ENCODE measurements at regions of chrX and their contacts with region 1.

Region 1: GRCh38 chrX:15143050-15143824 is 126.6 kb downstream of the ASB9 start:
- DNase-seq: no peak
- ATAC-seq: peak; percentile 94
- H3K4me3 ChIP-seq: no peak overlapping the region
- H3K27ac ChIP-seq: no peak overlapping the region
- H3K4me1 ChIP-seq: no peaks in the 10 kb centered on the region
- H3K27me3 ChIP-seq: no peaks in the 10 kb centered on the region; a peak in 1 of 4 replicates
- CTCF ChIP-seq: peak; percentile 79 to 81 (median 79)
- EP300 ChIP-seq: no peak
- POLR2A ChIP-seq: no peak
- RAD21 ChIP-seq: peak; percentile 80

Region 2: DNA sequence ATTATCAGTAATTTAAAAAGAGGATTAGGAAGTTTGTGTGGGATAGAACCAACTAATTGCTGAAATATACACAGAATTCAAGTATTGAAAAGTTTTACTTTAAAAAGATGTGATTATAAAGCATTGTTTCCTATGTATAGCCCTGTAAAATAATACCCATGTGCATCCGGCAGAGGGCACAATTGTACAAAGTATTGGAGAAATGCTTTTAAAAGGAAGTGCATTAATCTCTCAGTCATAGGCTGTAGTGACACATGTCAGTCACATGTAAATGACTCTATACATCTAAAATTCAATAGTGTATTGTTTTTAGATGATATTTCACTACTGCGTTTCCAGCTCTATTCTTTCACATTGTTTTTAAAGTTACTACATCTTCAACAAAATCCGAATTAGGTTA is 1103.9 kb before region 1 on chrX:
- CTCF ChIA-PET with region 1: interaction called, 9 read pairs
- POLR2A ChIA-PET with region 1: no interaction called
- RAD21 ChIA-PET with region 1: no interaction called
- SMC1A ChIA-PET with region 1: interaction called, 7 read pairs
- in situ Hi-C with region 1: loop called (anchors 10 kb)
- intact Hi-C with region 1: loop called (anchors 5 kb)
- DNase-seq: no peak
- ATAC-seq: peak; percentile 95
- H3K4me3 ChIP-seq: no peak overlapping the region
- H3K27ac ChIP-seq: no peak overlapping the region
- H3K4me1 ChIP-seq: no peaks in the 10 kb centered on the region
- H3K27me3 ChIP-seq: peaks cover 0 to 2% of the 10 kb centered on the region in 2 experiments; a peak in 1 of 4 replicates
- CTCF ChIP-seq: peak; percentile 48 to 81 (median 61); a peak in 5 of 6 replicates
- EP300 ChIP-seq: peak in 1 of 2 experiments; percentile 99; a peak in 2 of 4 replicates
- POLR2A ChIP-seq: no peak
- RAD21 ChIP-seq: peak; percentile 88

Region 3: GRCh38 chrX:14528629-14529289 is 614.5 kb before region 1 on chrX:
- CTCF ChIA-PET with region 1: interaction called, 12 read pairs
- POLR2A ChIA-PET with region 1: no interaction called
- RAD21 ChIA-PET with region 1: interaction called, 7 read pairs
- SMC1A ChIA-PET with region 1: no interaction called
- in situ Hi-C with region 1: no loop called
- intact Hi-C with region 1: no loop called
- DNase-seq: peak; percentile 4
- ATAC-seq: peak; percentile 91
- H3K4me3 ChIP-seq: no peak overlapping the region
- H3K27ac ChIP-seq: no peak overlapping the region
- H3K4me1 ChIP-seq: no peaks in the 10 kb centered on the region
- H3K27me3 ChIP-seq: no peaks in the 10 kb centered on the region
- CTCF ChIP-seq: peak; percentile 44 to 64 (median 63); a peak in 5 of 6 replicates
- EP300 ChIP-seq: no peak
- POLR2A ChIP-seq: no peak
- RAD21 ChIP-seq: peak; percentile 75

Region 4: GRCh38 chrX:14872851-14873675 is 270.2 kb before region 1 on chrX and contains the starts of genes FANCB and MOSPD2:
- CTCF ChIA-PET with region 1: interaction called, 3 read pairs
- POLR2A ChIA-PET with region 1: no interaction called
- RAD21 ChIA-PET with region 1: interaction called, 3 read pairs
- SMC1A ChIA-PET with region 1: no interaction called
- in situ Hi-C with region 1: no loop called
- intact Hi-C with region 1: loop called (anchors 10 kb)
- DNase-seq: peak; percentile 73
- ATAC-seq: peak; percentile 97
- H3K4me3 ChIP-seq: peak within 1 kb of the TSS; percentile 73
- H3K27ac ChIP-seq: peak within 1 kb of the TSS; percentile 69
- H3K4me1 ChIP-seq: no peaks in the 10 kb centered on the region
- H3K27me3 ChIP-seq: no peaks in the 10 kb centered on the region
- CTCF ChIP-seq: no peak
- EP300 ChIP-seq: no peak
- POLR2A ChIP-seq: peak; percentile 74
- RAD21 ChIP-seq: no peak
- polyA plus RNA-seq, gene FANCB: 9.3 to 14.6 TPM
- polyA plus RNA-seq, gene MOSPD2: 4.9 to 6.2 TPM

Region 5: GRCh38 chrX:15107367-15107988 is 35.8 kb before region 1 on chrX:
- CTCF ChIA-PET with region 1: interaction called, 16 read pairs
- POLR2A ChIA-PET with region 1: no interaction called
- RAD21 ChIA-PET with region 1: interaction called, 11 read pairs
- SMC1A ChIA-PET with region 1: interaction called, 29 read pairs
- in situ Hi-C with region 1: no loop called
- intact Hi-C with region 1: no loop called
- DNase-seq: no peak
- ATAC-seq: peak; percentile 78
- H3K4me3 ChIP-seq: no peak overlapping the region
- H3K27ac ChIP-seq: no peak overlapping the region
- H3K4me1 ChIP-seq: no peaks in the 10 kb centered on the region
- H3K27me3 ChIP-seq: no peaks in the 10 kb centered on the region
- CTCF ChIP-seq: peak; percentile 23 to 35 (median 30); a peak in 3 of 6 replicates
- EP300 ChIP-seq: no peak
- POLR2A ChIP-seq: no peak
- RAD21 ChIP-seq: peak; percentile 49

Region 6: GRCh38 chrX:15194146-15194545 is 50.9 kb after region 1 on chrX:
- CTCF ChIA-PET with region 1: interaction called, 6 read pairs
- POLR2A ChIA-PET with region 1: no interaction called
- RAD21 ChIA-PET with region 1: interaction called, 5 read pairs
- SMC1A ChIA-PET with region 1: interaction called, 13 read pairs
- in situ Hi-C with region 1: no loop called
- intact Hi-C with region 1: no loop called
- DNase-seq: no peak
- ATAC-seq: no peak
- H3K4me3 ChIP-seq: no peak overlapping the region
- H3K27ac ChIP-seq: no peak overlapping the region
- H3K4me1 ChIP-seq: no peaks in the 10 kb centered on the region
- H3K27me3 ChIP-seq: no peaks in the 10 kb centered on the region
- CTCF ChIP-seq: no peak
- EP300 ChIP-seq: no peak
- POLR2A ChIP-seq: no peak
- RAD21 ChIP-seq: no peak

Region 7: GRCh38 chrX:15242899-15243555 is 99.8 kb after region 1 on chrX:
- CTCF ChIA-PET with region 1: interaction called, 45 read pairs
- POLR2A ChIA-PET with region 1: no interaction called
- RAD21 ChIA-PET with region 1: interaction called, 46 read pairs
- SMC1A ChIA-PET with region 1: interaction called, 38 read pairs
- in situ Hi-C with region 1: no loop called
- intact Hi-C with region 1: loop called (anchors 2 kb)
- DNase-seq: peak; percentile 17
- ATAC-seq: peak; percentile 85
- H3K4me3 ChIP-seq: no peak overlapping the region
- H3K27ac ChIP-seq: no peak overlapping the region
- H3K4me1 ChIP-seq: no peaks in the 10 kb centered on the region
- H3K27me3 ChIP-seq: no peaks in the 10 kb centered on the region
- CTCF ChIP-seq: peak; percentile 56 to 65 (median 64)
- EP300 ChIP-seq: no peak
- POLR2A ChIP-seq: no peak
- RAD21 ChIP-seq: peak; percentile 85

Measured in GM12878 (cell line).